ENCODE measurements at regions of chr12 and their contacts with region 1.

Region 1: DNA sequence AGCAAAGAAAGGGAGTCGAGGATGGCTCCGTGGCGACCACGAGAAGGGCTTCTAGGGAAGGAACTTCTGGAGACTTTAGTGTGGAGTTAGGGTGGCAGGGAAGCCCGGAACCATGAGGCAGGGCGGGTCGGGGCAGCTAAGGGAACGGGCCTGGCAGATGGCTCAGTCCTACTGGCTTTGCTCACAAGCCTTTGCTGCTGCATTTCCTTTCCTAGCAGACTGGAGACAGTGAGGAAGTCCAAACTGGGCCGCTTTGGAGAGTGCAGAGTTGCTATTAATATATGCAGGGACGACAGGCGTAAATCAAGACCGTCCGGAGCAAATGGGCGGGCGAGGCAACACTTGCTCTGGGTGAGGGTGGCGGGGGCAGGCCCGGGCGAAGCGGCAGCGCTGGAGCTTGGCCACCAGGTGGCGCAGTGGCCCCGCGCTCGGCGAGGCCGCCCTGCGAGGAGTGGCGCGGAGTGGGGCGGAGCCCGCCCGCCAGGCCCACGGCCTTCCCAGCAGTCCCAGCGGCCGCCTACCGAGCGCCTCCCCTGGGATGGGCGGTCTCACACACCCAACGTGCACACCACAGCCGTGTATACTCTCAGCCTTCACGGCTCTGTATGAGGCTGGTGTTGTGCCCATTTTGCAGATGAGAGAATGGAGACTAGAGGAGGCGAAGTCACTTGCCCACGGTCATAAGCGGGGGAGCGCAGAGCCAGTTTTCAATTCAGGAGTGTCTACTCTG is 24.4 kb upstream of the LRTM2 start:
- DNase-seq: peak; percentile 90 to 97 (median 94)
- ATAC-seq: peak; percentile 93
- H3K4me3 ChIP-seq: peak overlapping the region; percentile 80 to 82
- H3K4me3 Mint-ChIP-seq: peak overlapping the region; percentile 90
- H3K27ac ChIP-seq: peak overlapping the region; percentile 54 to 80
- H3K27ac Mint-ChIP-seq: peak overlapping the region; percentile 91
- H3K4me1 ChIP-seq: peaks cover 22% of the 10 kb centered on the region
- H3K4me1 Mint-ChIP-seq: peaks cover 20% of the 10 kb centered on the region
- H3K27me3 ChIP-seq: no peaks in the 10 kb centered on the region
- H3K27me3 Mint-ChIP-seq: no peaks in the 10 kb centered on the region
- CTCF ChIP-seq: peak; percentile 92

Region 2: DNA sequence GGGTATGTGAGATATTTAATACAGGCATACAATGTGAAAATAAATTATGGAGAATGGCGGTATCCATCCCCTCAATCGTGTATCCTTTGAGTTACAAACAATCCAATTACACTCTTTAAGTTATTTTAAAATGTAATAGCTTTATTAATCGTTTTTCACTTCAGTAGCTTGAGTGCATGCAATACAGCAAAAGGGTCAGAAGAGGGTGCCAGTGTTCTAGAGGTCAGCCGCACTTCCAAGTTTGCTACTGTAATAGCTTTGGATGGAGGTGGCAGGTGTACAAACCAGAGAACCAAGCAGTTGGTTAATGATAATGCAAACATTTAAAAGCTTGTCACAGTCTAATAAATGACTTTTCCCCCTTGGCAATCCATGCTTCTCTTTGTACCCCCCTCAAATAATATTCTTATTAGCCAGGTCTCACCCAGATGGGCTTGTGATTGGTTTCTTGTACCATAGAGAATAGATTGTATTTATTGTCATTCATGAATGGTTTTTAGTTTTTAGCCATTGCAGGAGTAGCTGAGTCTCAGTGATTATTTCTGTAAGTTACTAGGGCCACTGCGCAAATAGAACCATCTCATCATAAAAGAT is 677.9 kb before region 1 on chr12:
- CTCF ChIA-PET with region 1: no interaction called
- POLR2A ChIA-PET with region 1: no interaction called
- intact Hi-C with region 1: loop called in 1 of 2 experiments (anchors 10 kb)
- DNase-seq: peak; percentile 48 to 83 (median 74)
- ATAC-seq: peak; percentile 52
- H3K4me3 ChIP-seq: no peak overlapping the region
- H3K4me3 Mint-ChIP-seq: no peak overlapping the region
- H3K27ac ChIP-seq: no peak overlapping the region
- H3K27ac Mint-ChIP-seq: no peak overlapping the region
- H3K4me1 ChIP-seq: peaks cover 7% of the 10 kb centered on the region
- H3K4me1 Mint-ChIP-seq: peaks cover 7% of the 10 kb centered on the region
- H3K27me3 ChIP-seq: no peaks in the 10 kb centered on the region
- H3K27me3 Mint-ChIP-seq: no peaks in the 10 kb centered on the region
- CTCF ChIP-seq: peak; percentile 98

Region 3: DNA sequence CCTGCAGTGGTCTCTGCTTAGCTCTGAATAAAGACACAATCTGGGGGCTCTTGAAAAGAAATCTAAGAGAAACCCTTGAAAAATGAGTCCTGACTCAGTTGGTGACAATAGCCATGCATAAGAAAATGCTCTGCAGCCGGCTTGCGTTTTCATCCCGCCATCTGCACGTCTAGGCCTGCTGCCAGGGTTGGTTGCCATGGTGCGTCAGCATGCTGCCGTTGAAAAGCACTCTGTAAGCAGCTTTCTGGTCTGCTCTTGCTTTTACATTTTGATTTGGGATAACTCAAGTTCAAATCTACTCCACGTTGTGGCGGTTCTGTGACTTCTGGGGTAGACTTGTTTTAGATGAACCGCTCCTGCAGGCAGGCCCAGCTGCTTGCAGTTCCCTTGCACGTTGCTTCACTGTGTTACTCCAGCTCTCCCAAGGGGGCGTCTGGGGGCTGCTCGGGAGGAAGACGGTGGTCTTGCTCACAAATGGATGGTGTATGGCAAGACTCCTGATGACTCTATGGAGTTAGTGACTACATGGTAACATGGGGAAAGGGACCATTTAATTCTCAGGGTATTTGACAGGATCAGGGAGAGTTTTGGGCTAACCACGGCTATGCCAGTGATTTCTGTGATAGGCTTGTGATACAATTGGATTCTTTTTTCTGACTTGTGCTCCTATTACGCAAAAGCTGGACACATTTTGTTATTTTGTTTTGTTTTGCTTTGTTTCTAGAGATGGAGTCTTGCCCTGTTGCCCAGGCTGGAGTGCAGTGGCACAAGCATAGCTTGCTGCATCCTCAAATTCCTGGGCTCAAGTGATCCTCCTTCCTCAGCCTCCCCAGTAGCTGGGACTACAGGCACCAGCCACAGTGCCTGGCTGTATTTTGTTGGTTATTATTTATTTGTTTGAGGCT is 151.2 kb before region 1 on chr12:
- CTCF ChIA-PET with region 1: interaction called, 454 read pairs
- POLR2A ChIA-PET with region 1: interaction called, 4 read pairs
- intact Hi-C with region 1: no loop called
- DNase-seq: no peak
- ATAC-seq: no peak
- H3K4me3 ChIP-seq: no peak overlapping the region
- H3K4me3 Mint-ChIP-seq: no peak overlapping the region
- H3K27ac ChIP-seq: no peak overlapping the region
- H3K27ac Mint-ChIP-seq: no peak overlapping the region
- H3K4me1 ChIP-seq: no peaks in the 10 kb centered on the region
- H3K4me1 Mint-ChIP-seq: no peaks in the 10 kb centered on the region
- H3K27me3 ChIP-seq: no peaks in the 10 kb centered on the region
- H3K27me3 Mint-ChIP-seq: peaks cover 9% of the 10 kb centered on the region
- CTCF ChIP-seq: no peak

Region 4: GRCh38 chr12:1690578-1691122 is 105.3 kb before region 1 on chr12 and contains the start of gene ADIPOR2:
- CTCF ChIA-PET with region 1: interaction called, 14 read pairs
- POLR2A ChIA-PET with region 1: interaction called, 4 read pairs
- intact Hi-C with region 1: loop called (anchors 1 to 2 kb)
- DNase-seq: peak; percentile 88 to 98 (median 94)
- ATAC-seq: peak; percentile 97
- H3K4me3 ChIP-seq: peak within 1 kb of the TSS; percentile 84 to 91
- H3K4me3 Mint-ChIP-seq: peak within 1 kb of the TSS; percentile 92
- H3K27ac ChIP-seq: peak within 1 kb of the TSS; percentile 73 to 94
- H3K27ac Mint-ChIP-seq: peak within 1 kb of the TSS; percentile 99
- H3K4me1 ChIP-seq: peaks cover 20% of the 10 kb centered on the region
- H3K4me1 Mint-ChIP-seq: peaks cover 46% of the 10 kb centered on the region
- H3K27me3 ChIP-seq: no peaks in the 10 kb centered on the region
- H3K27me3 Mint-ChIP-seq: no peaks in the 10 kb centered on the region
- CTCF ChIP-seq: no peak
- total RNA-seq, gene ADIPOR2: 19.4 to 22.5 TPM

Region 5: GRCh38 chr12:1820191-1820895 is 24.4 kb after region 1 on chr12 and contains the start of gene LRTM2:
- CTCF ChIA-PET with region 1: no interaction called
- POLR2A ChIA-PET with region 1: no interaction called
- intact Hi-C with region 1: no loop called
- DNase-seq: no peak
- ATAC-seq: no peak
- H3K4me3 ChIP-seq: no peak within 1 kb of the TSS
- H3K4me3 Mint-ChIP-seq: no peak within 1 kb of the TSS
- H3K27ac ChIP-seq: no peak within 1 kb of the TSS
- H3K27ac Mint-ChIP-seq: no peak within 1 kb of the TSS
- H3K4me1 ChIP-seq: no peaks in the 10 kb centered on the region
- H3K4me1 Mint-ChIP-seq: no peaks in the 10 kb centered on the region
- H3K27me3 ChIP-seq: no peaks in the 10 kb centered on the region
- H3K27me3 Mint-ChIP-seq: peaks cover 35% of the 10 kb centered on the region
- CTCF ChIP-seq: no peak
- total RNA-seq, gene LRTM2: not detected

Region 6: DNA sequence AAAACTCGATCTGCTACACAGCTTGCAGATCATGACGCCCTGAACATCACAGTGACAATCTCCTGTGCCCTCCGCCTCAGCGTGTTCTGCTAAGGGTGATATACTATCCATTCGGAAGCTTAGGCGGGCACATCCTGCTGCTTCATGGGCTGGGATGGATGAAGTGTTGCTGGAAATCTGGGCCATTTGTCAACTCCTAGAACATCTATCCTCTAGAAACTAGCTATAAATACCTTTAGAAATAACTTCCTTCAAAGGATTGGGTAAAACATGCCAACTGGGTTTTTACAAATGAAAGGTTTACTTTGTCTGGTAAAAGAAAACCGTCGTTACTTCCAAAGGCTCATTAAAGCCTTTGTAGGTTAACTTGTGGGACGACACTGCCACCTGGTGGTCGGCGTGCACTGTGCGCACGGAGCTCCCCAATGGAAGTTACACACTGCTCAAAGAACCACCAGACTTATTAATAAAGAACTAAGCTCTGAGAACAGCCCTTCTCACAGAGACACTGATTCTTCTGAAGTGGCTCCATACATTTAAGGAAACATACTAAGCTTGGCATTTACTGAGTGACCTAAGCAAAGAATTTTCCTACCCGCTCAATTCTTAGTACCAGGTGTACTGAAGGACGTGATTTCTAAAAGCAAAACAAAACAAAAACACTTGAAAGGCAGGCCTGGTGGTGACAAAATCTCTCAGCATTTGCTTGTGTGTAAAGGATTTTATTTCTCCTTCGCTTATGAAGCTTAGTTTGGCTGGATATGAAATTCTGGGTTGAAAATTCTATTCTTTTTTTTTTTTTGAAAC is 144.1 kb after region 1 on chr12:
- CTCF ChIA-PET with region 1: interaction called, 212 read pairs
- POLR2A ChIA-PET with region 1: interaction called, 35 read pairs
- intact Hi-C with region 1: loop called (anchors 1 kb)
- DNase-seq: peak; percentile 81 to 96 (median 90)
- ATAC-seq: peak; percentile 100
- H3K4me3 ChIP-seq: no peak overlapping the region
- H3K4me3 Mint-ChIP-seq: no peak overlapping the region
- H3K27ac ChIP-seq: no peak overlapping the region
- H3K27ac Mint-ChIP-seq: no peak overlapping the region
- H3K4me1 ChIP-seq: peaks cover 5% of the 10 kb centered on the region
- H3K4me1 Mint-ChIP-seq: peaks cover 4% of the 10 kb centered on the region
- H3K27me3 ChIP-seq: no peaks in the 10 kb centered on the region
- H3K27me3 Mint-ChIP-seq: no peaks in the 10 kb centered on the region
- CTCF ChIP-seq: peak; percentile 92

Region 7: GRCh38 chr12:2583091-2583497 is 787.1 kb after region 1 on chr12:
- CTCF ChIA-PET with region 1: no interaction called
- POLR2A ChIA-PET with region 1: no interaction called
- intact Hi-C with region 1: loop called (anchors 5 kb)
- DNase-seq: peak in 7 of 9 experiments; percentile 13 to 56 (median 37)
- ATAC-seq: no peak
- H3K4me3 ChIP-seq: no peak overlapping the region
- H3K4me3 Mint-ChIP-seq: no peak overlapping the region
- H3K27ac ChIP-seq: no peak overlapping the region
- H3K27ac Mint-ChIP-seq: no peak overlapping the region
- H3K4me1 ChIP-seq: peaks cover 4% of the 10 kb centered on the region
- H3K4me1 Mint-ChIP-seq: peaks cover 3% of the 10 kb centered on the region
- H3K27me3 ChIP-seq: peaks cover 2 to 7% of the 10 kb centered on the region in 2 experiments
- H3K27me3 Mint-ChIP-seq: peaks cover 47% of the 10 kb centered on the region
- CTCF ChIP-seq: peak; percentile 29

Region 8: GRCh38 chr12:2912216-2912575 is 1116.2 kb after region 1 on chr12:
- CTCF ChIA-PET with region 1: no interaction called
- POLR2A ChIA-PET with region 1: no interaction called
- intact Hi-C with region 1: no loop called
- DNase-seq: no peak
- ATAC-seq: no peak
- H3K4me3 ChIP-seq: no peak overlapping the region
- H3K4me3 Mint-ChIP-seq: no peak overlapping the region
- H3K27ac ChIP-seq: no peak overlapping the region
- H3K27ac Mint-ChIP-seq: no peak overlapping the region
- H3K4me1 ChIP-seq: no peaks in the 10 kb centered on the region
- H3K4me1 Mint-ChIP-seq: no peaks in the 10 kb centered on the region
- H3K27me3 ChIP-seq: no peaks in the 10 kb centered on the region
- H3K27me3 Mint-ChIP-seq: no peaks in the 10 kb centered on the region
- CTCF ChIP-seq: no peak